Activated T-helper 2 cell treated with anti-CD3 and anti-CD28 coated beads, Interferon-gamma antibody, Interleukin-2, Interleukin-4, amounts not matched to agents 10 μg/mL and 5 μg/mL and 100 μg/mL, durations not matched to agents 14 hours and 24 hours and 36 hours (primary cell): ENCODE measurements at regions of chr12 and their contacts with region 1.

Region 1: GRCh38 chr12:6981152-6982052 is 10.7 kb downstream of the EMG1 start:
- DNase-seq: no peak
- H3K4me3 Mint-ChIP-seq: no peak overlapping the region
- H3K27ac Mint-ChIP-seq: no peak overlapping the region
- H3K4me1 Mint-ChIP-seq: no peaks in the 10 kb centered on the region
- H3K27me3 Mint-ChIP-seq: no peaks in the 10 kb centered on the region

Region 2: GRCh38 chr12:6998708-6999451 is 17.5 kb after region 1 on chr12:
- intact Hi-C with region 1: loop called (anchors 1 kb)
- DNase-seq: no peak
- H3K4me3 Mint-ChIP-seq: no peak overlapping the region
- H3K27ac Mint-ChIP-seq: no peak overlapping the region
- H3K4me1 Mint-ChIP-seq: peaks cover 2% of the 10 kb centered on the region
- H3K27me3 Mint-ChIP-seq: no peaks in the 10 kb centered on the region